ENCODE measurements at regions of chrX and their contacts with region 1.

Region 1: DNA sequence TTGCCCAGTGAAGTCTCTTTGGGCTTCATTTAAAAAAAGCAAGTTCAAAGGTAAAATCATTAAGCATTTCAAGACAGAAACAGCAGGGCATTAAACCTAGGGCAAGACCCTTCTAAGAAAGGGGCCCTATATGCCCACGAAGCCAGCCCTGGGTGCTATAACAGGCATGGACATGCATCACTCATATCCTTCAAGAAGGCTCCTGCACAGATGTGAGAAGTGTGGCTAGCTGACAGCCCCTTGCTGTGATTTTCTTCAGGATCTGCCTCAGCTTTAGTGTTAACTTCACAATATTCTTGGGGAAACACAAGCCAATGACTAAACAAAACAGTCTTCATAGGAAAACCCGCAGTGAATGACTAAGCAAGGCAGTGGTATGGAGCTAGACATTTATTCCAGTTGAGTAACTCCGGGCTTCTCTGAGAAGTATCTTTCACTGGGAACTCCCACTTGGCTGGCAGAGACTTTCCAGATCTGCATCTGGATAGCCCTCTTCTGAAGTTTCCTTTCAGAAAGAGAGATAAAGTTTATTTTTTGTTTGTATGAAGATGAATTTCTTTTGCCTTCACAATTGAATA is 11.9 kb upstream of the MAOA start:
- DNase-seq: peak; percentile 81
- H3K4me3 Mint-ChIP-seq: no peak overlapping the region
- H3K27ac Mint-ChIP-seq: peak overlapping the region; percentile 82
- H3K4me1 Mint-ChIP-seq: peaks cover 6% of the 10 kb centered on the region
- H3K27me3 Mint-ChIP-seq: peaks cover 31% of the 10 kb centered on the region
- CTCF ChIP-seq: no peak

Region 2: DNA sequence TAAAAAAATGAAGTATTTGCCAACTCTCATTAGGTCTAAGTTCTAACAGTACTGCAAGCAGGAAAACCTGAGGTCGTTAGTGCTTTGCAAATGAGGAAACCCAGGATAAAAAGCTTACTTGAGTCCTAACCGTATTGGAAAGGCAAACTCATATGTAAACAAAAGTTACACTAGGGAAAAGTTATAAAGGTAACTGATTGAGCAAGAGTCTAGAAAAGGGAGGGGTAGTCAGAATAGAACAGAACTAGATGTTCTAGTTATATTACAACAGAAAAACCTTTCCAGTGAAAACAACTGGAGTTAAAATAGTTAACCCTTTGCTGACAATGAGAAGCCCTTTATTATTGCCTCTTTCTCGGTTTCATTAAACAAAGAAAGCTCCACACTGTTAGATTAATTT is 54.5 kb before region 1 on chrX:
- CTCF ChIA-PET with region 1: no interaction called
- POLR2A ChIA-PET with region 1: interaction called, 11 read pairs
- intact Hi-C with region 1: loop called (anchors 5 kb)
- DNase-seq: peak; percentile 85
- H3K4me3 Mint-ChIP-seq: peak overlapping the region; percentile 28
- H3K27ac Mint-ChIP-seq: peak overlapping the region; percentile 91
- H3K4me1 Mint-ChIP-seq: peaks cover 12% of the 10 kb centered on the region
- H3K27me3 Mint-ChIP-seq: peaks cover 16% of the 10 kb centered on the region
- CTCF ChIP-seq: no peak

Region 3: GRCh38 chrX:43629229-43629628 is 15.0 kb before region 1 on chrX:
- CTCF ChIA-PET with region 1: no interaction called
- POLR2A ChIA-PET with region 1: interaction called, 11 read pairs
- intact Hi-C with region 1: no loop called
- DNase-seq: no peak
- H3K4me3 Mint-ChIP-seq: no peak overlapping the region
- H3K27ac Mint-ChIP-seq: no peak overlapping the region
- H3K4me1 Mint-ChIP-seq: no peaks in the 10 kb centered on the region
- H3K27me3 Mint-ChIP-seq: peaks cover 75% of the 10 kb centered on the region
- CTCF ChIP-seq: no peak